GM10248 (cell line): ENCODE measurements at regions of chr17 and their contacts with region 1.

Region 1: DNA sequence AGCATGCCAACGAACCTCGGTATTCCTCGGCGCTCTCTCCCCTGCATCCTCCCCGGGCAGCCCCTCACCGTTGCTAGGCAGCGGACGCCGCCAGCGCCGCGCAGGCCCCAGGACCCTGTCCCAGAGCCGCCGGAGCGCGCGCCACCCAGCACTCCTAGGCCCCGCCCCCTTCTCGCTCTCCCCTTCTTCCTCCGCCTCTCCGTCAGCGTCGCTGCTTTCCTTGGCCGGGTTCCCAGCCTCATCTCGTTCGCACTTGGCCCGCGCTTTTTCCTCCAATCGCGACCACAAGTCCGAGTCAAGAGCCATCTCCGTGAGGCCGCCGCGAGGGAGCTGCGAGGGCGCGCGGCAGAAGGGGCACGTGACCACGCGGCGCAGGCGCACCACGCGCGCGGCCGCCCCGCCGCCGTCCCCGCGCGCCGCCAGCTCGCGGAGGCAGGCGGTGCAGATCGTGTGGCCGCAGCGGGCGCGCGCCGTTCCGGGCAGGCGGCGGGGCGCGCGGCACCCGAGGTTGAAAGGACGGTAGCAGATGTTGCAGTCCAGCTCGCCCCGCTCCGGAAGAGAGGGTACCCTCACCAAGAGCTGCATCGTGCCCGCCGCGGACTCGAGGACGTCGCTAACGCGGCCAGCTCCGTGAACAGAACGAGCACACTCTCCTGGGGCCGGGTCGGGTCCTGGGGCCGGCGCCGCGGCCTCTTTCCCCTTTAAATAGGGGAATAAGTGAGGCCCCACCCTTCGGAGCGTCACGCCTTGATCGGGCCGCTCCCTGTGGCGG is at the start of gene RNF227:
- DNase-seq: peak; percentile 85
- CTCF ChIP-seq: no peak

Region 2: DNA sequence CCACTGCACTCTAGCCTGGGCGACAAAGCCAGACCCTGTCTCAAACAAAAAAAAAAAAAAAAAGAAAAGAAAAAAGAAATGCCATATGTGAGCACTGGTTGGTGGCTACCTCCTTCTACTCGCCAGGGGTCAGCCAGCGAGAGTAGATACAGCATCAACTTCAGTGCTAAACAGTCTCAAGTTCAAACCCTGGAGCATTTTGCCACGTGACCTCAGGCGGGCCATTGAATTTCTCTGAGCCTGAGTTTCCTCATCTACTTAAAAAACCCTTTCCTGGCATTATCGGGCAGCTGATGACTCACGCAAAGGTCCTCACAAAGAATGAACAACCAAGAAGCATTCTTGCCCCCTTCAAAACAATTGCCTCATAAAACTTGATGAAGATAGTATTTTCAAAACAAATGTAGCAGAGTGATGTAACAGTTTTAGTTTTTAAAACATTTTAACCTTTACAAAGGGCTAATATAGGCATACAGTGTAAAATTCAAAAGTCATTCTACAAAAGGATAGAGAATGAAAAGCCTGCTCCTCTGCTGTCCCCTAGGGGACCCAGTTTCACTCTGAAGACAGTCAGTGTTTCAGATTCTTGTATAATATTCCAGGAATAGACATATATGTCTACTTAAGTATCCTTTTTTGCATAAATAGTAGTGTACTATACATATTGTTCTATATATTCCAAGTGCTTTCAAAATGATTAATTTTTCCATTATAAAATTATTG is 169.9 kb before region 1 on chr17:
- CTCF ChIA-PET with region 1: interaction called, 11 read pairs
- POLR2A ChIA-PET with region 1: no interaction called
- DNase-seq: no peak
- CTCF ChIP-seq: no peak

Region 3: DNA sequence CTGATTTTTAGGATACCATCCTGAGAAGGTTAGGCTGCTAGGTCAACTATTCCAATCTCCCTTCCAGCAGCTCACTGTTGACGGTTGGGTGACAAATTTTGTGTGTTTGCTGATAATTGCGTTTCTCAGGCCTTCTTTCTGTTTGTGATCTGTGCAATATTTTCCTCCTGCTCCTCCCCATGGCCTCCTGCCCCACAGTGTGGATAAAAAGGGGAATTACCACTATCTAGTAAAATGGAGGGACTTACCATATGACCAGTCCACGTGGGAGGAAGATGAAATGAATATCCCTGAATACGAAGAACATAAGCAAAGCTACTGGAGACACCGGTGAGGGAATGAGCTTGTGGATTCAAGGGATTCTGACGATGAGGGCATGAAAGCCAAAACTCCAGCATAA is 18.0 kb before region 1 on chr17:
- CTCF ChIA-PET with region 1: interaction called, 23 read pairs
- POLR2A ChIA-PET with region 1: no interaction called
- DNase-seq: no peak
- CTCF ChIP-seq: no peak

Region 4: GRCh38 chr17:7931709-7932482 is 16.1 kb after region 1 on chr17 and contains the starts of genes CNTROB and TRAPPC1:
- CTCF ChIA-PET with region 1: interaction called, 77 read pairs
- POLR2A ChIA-PET with region 1: interaction called, 5 read pairs
- DNase-seq: peak; percentile 100
- CTCF ChIP-seq: no peak

Region 5: DNA sequence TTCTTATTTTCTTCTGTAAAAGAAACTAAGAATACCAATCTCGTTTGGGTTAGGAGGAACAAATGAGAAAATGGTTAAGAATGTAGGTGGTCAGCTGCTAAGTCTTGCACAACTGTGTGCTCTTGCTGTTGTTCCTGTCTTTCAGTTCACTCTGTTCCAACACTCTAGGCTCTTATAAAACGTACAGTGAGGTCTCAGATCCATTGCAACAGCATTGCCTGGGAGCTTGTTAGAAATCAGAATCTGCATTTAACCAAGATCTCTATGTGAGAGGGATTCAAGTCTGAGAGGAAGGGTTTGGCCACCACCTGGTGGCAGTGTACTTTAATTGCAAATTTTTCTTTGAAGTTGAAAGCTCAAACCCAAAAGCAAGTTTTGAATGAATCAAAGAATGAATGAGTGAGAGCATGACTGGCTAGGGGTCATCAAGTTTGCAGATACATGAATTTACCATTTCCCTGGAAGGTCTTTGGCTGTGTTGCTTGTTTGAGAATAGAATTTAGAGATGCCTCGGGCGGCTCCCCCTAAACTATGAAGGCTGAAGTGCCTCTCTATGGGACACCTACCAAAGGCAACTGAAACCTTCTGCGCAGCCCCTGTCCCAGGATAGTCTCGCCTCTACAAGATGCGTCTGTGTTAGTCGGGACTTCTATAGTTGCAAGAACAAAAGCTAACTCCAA is 125.6 kb after region 1 on chr17:
- CTCF ChIA-PET with region 1: interaction called, 17 read pairs
- POLR2A ChIA-PET with region 1: no interaction called
- DNase-seq: peak; percentile 65
- CTCF ChIP-seq: peak; percentile 47